Activated CD4-positive, alpha-beta memory T cell treated with anti-CD3 and anti-CD28 coated beads for 36 hours (primary cell): ENCODE measurements at regions of chr15 and their contacts with region 1.

Region 1: DNA sequence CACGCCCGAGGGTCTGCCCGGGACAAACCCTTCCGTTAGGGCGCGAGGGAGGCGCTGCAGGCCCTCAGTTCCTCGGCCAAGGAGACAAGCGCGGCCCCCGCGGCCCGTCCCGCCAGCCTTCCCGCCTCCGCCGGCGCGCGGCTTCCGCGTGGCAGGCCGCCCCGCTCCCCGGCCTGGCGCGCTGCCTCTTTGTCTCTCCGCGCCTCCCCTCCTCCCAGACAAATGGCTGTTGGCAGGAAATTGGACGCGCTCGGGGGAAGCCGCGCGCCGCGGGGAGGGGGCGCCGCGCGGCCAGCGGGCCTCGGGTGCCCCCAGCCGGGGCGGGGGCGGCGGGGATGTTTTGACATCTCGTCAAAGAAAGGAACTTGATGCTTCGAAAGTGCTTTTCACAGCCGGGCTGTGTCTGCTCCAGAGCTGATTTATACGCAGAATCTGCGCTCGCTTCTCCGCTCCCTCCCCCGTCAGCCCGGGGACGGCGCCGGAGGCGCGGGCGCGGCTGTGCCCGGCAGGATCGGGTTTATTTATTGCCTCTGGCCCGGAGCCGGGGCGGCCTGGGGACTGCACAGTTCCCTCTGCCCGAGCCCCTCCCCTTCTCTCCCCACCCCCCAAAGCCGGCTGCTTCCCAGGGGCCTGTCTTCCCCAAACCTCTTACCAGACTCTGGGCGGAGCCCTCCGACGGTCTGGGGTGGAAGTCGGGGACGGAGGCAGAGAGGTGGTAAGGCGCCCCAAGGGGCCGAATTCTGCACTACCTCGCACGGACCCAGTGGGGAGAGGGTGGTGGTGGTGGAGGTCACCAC is 20.7 kb downstream of the SHF start:
- DNase-seq: peak; percentile 92
- H3K4me3 Mint-ChIP-seq: peak overlapping the region; percentile 62
- H3K27ac Mint-ChIP-seq: peak overlapping the region; percentile 77
- H3K4me1 Mint-ChIP-seq: peaks cover 13% of the 10 kb centered on the region
- H3K27me3 Mint-ChIP-seq: no peaks in the 10 kb centered on the region

Region 2: GRCh38 chr15:45118131-45118588 is 48.9 kb before region 1 on chr15:
- CTCF ChIA-PET with region 1: interaction called, 18 read pairs
- POLR2A ChIA-PET with region 1: no interaction called
- intact Hi-C with region 1: no loop called
- DNase-seq: peak; percentile 91
- H3K4me3 Mint-ChIP-seq: no peak overlapping the region
- H3K27ac Mint-ChIP-seq: no peak overlapping the region
- H3K4me1 Mint-ChIP-seq: peaks cover 26% of the 10 kb centered on the region
- H3K27me3 Mint-ChIP-seq: peaks cover 57% of the 10 kb centered on the region

Region 3: DNA sequence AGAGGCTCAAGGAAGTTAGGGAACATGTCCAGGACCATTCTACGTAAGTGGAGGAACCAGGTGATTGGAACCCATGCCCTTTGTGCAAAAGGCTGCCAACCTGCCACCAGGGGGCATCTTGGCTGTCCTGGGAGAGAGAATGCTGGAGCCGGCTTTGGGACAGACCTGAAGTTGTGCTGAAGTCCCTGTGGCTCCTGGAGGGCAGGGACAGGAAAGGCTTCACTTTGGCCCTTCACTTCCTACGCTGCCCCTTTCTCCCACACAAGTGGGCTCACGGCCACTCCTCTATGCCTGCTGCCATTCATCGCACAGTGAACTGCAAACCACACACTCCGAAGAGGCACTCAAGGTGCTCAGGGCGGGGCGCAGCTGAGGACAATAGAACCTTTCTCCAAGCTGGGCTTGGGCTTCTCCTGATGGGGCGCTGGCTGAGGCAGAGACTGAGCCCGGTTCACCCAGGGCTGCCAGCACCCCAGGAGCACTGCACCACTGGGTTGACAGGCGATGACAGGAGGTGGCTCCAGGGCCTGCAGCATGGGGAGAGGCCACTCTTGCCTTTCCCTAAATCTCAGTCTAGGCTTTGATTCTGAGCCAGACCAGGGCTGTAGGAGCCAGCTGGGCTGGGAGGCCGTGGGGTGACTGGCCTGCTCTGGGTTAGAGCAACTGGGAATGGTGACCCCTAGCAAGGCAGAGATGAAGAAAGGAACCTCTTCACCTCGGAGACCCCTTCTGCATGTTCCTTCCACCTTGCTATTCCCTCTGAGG is 12.4 kb after region 1 on chr15:
- CTCF ChIA-PET with region 1: interaction called, 22 read pairs
- POLR2A ChIA-PET with region 1: interaction called, 5 read pairs
- intact Hi-C with region 1: no loop called
- DNase-seq: peak; percentile 63
- H3K4me3 Mint-ChIP-seq: no peak overlapping the region
- H3K27ac Mint-ChIP-seq: no peak overlapping the region
- H3K4me1 Mint-ChIP-seq: peaks cover 13% of the 10 kb centered on the region
- H3K27me3 Mint-ChIP-seq: no peaks in the 10 kb centered on the region

Region 4: DNA sequence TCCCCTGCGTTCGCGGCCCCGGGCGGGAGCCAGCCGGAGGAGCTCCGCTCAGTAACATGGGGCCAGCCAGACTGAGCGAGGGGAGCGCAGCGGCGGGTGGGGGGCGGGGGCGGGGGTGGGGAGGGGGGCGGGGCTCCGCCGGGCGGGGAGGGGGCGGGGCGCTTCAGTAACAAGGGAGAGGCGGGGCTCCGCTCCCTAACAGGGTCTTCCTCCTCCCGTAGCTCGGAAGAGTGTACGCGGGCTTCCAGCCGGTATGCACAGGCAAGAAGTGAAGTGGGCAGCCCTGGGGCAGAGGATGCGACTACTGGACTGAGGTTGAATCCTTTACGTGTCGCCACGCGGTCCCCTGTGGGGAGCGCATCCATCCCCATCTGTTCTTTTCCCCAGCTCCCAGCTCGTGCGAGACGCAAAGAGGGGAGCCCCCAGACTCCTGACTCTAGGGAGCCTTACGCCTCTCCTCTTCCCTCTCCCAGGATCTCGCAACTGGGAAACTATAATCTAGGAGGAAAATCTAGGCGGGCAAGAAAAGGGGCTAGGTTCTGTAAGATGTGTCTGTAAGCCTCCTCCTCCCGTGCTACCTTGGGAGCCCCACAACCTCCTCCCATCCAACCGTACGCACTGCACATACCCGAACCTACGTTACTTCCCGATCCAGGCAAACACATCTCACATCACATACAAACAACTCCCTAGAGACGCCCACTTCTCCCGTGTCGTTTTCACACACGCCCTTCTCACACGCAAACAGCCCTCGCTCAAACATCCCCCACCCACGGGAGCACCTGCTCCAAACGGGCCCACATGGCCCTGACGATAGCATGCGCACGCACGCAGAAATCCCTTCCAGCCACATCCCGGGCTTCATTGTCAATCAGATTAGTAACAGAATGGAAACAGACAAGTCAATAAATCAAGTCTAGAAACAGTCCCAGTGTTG is 21.1 kb after region 1 on chr15 and contains the start of gene SHF:
- CTCF ChIA-PET with region 1: interaction called, 13 read pairs
- POLR2A ChIA-PET with region 1: interaction called, 9 read pairs
- intact Hi-C with region 1: loop called (anchors 1 kb)
- DNase-seq: peak; percentile 84
- H3K4me3 Mint-ChIP-seq: peak within 1 kb of the TSS; percentile 76
- H3K27ac Mint-ChIP-seq: peak within 1 kb of the TSS; percentile 82
- H3K4me1 Mint-ChIP-seq: peaks cover 28% of the 10 kb centered on the region
- H3K27me3 Mint-ChIP-seq: no peaks in the 10 kb centered on the region
- total RNA-seq, gene SHF: 11.8 to 12.5 TPM

Region 5: GRCh38 chr15:45205192-45205591 is 38.2 kb after region 1 on chr15:
- CTCF ChIA-PET with region 1: interaction called, 48 read pairs
- POLR2A ChIA-PET with region 1: interaction called, 7 read pairs
- intact Hi-C with region 1: no loop called
- DNase-seq: peak; percentile 81
- H3K4me3 Mint-ChIP-seq: no peak overlapping the region
- H3K27ac Mint-ChIP-seq: no peak overlapping the region
- H3K4me1 Mint-ChIP-seq: peaks cover 4% of the 10 kb centered on the region
- H3K27me3 Mint-ChIP-seq: peaks cover 7% of the 10 kb centered on the region

Region 6: GRCh38 chr15:45253330-45253729 is 86.3 kb after region 1 on chr15:
- CTCF ChIA-PET with region 1: interaction called, 10 read pairs
- POLR2A ChIA-PET with region 1: no interaction called
- intact Hi-C with region 1: no loop called
- DNase-seq: no peak
- H3K4me3 Mint-ChIP-seq: no peak overlapping the region
- H3K27ac Mint-ChIP-seq: no peak overlapping the region
- H3K4me1 Mint-ChIP-seq: no peaks in the 10 kb centered on the region
- H3K27me3 Mint-ChIP-seq: no peaks in the 10 kb centered on the region

Region 7: GRCh38 chr15:45279024-45279698 is 112.1 kb after region 1 on chr15:
- CTCF ChIA-PET with region 1: interaction called, 3 read pairs
- POLR2A ChIA-PET with region 1: no interaction called
- intact Hi-C with region 1: loop called (anchors 2 kb)
- DNase-seq: peak; percentile 98
- H3K4me3 Mint-ChIP-seq: peak overlapping the region; percentile 85
- H3K27ac Mint-ChIP-seq: peak overlapping the region; percentile 57
- H3K4me1 Mint-ChIP-seq: peaks cover 10% of the 10 kb centered on the region
- H3K27me3 Mint-ChIP-seq: no peaks in the 10 kb centered on the region